Left ventricle myocardium inferior (tissue), 1 donor: ENCODE measurements at regions of chr17 and their contacts with region 1.

Region 1: GRCh38 chr17:42392664-42393415 is 4.6 kb upstream of the STAT3 start:
- DNase-seq: no peak
- H3K4me3 ChIP-seq: no peak overlapping the region
- H3K27ac ChIP-seq: no peak overlapping the region
- H3K4me1 ChIP-seq: peaks cover 16% of the 10 kb centered on the region
- H3K27me3 ChIP-seq: no peaks in the 10 kb centered on the region
- CTCF ChIP-seq: no peak

Region 2: DNA sequence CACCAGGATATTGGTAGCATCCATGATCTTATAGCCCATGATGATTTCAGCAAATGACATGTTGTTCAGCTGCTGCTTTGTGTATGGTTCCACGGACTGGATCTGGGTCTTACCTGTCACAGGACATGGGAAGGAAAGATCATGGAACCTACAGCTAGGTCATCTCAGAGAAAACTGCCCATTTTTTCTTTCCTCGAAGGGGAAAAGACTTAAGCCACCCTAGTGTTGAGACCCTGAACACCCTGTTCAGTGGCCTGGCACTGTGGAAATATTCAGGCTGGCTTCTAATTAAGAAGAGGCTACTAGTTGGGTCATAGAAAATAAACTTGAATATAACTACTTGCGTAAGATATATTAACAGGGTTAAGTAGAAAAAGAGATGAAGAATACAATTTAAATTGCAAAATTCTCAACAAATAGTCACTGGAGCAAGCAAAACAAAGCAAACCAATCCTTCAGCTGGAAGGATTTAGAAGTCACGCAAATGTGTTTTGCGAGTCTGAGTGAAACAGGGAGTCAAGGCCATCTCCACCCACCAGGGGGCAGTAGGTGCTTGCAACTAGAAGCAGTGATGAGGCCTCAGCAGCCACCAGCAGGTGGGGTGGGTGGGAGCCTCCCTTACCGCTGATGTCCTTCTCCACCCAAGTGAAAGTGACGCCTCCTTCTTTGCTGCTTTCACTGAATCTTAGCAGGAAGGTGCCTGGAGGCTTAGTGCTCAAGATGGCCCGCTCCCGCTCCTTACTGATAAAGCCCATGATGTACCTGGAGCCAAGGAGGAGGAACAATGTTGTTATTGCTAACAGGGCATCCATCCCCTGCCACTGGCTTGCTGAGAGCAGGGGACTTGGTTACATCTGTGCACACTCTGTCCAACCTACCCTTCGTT is 70.2 kb before region 1 on chr17:
- intact Hi-C with region 1: loop called (anchors 5 kb)
- DNase-seq: peak; percentile 92
- H3K4me3 ChIP-seq: no peak overlapping the region
- H3K27ac ChIP-seq: peak overlapping the region; percentile 25
- H3K4me1 ChIP-seq: peaks cover 46% of the 10 kb centered on the region
- H3K27me3 ChIP-seq: no peaks in the 10 kb centered on the region
- CTCF ChIP-seq: peak; percentile 99

Region 3: GRCh38 chr17:42686520-42687144 is 293.8 kb after region 1 on chr17:
- intact Hi-C with region 1: no loop called
- DNase-seq: no peak
- H3K4me3 ChIP-seq: no peak overlapping the region
- H3K27ac ChIP-seq: no peak overlapping the region
- H3K4me1 ChIP-seq: peaks cover 37% of the 10 kb centered on the region
- H3K27me3 ChIP-seq: no peaks in the 10 kb centered on the region
- CTCF ChIP-seq: no peak